Ascending aorta (tissue), 2 donors: ENCODE measurements at regions of chr16 and their contacts with region 1.

Region 1: GRCh38 chr16:67428146-67428731 is 2.7 kb upstream of the HSD11B2 start:
- DNase-seq: peak in 1 of 2 donors; percentile 75
- H3K4me3 ChIP-seq: no peak overlapping the region
- H3K27ac ChIP-seq: no peak overlapping the region
- H3K4me1 ChIP-seq: peaks cover 11 to 12% of the 10 kb centered on the region in 2 donors
- H3K27me3 ChIP-seq: peaks cover 8% of the 10 kb centered on the region
- CTCF ChIP-seq: peak; percentile 75 to 80 (median 75)

Region 2: GRCh38 chr16:67470359-67470758 is 42.1 kb after region 1 on chr16:
- intact Hi-C with region 1: loop called (anchors 1 kb)
- DNase-seq: peak in 1 of 2 donors; percentile 80
- H3K4me3 ChIP-seq: no peak overlapping the region
- H3K27ac ChIP-seq: no peak overlapping the region
- H3K4me1 ChIP-seq: peaks cover 3 to 10% of the 10 kb centered on the region in 2 donors
- H3K27me3 ChIP-seq: no peaks in the 10 kb centered on the region
- CTCF ChIP-seq: no peak